AG04450 (cell line): ENCODE measurements at regions of chr15 and their contacts with region 1.

Region 1: DNA sequence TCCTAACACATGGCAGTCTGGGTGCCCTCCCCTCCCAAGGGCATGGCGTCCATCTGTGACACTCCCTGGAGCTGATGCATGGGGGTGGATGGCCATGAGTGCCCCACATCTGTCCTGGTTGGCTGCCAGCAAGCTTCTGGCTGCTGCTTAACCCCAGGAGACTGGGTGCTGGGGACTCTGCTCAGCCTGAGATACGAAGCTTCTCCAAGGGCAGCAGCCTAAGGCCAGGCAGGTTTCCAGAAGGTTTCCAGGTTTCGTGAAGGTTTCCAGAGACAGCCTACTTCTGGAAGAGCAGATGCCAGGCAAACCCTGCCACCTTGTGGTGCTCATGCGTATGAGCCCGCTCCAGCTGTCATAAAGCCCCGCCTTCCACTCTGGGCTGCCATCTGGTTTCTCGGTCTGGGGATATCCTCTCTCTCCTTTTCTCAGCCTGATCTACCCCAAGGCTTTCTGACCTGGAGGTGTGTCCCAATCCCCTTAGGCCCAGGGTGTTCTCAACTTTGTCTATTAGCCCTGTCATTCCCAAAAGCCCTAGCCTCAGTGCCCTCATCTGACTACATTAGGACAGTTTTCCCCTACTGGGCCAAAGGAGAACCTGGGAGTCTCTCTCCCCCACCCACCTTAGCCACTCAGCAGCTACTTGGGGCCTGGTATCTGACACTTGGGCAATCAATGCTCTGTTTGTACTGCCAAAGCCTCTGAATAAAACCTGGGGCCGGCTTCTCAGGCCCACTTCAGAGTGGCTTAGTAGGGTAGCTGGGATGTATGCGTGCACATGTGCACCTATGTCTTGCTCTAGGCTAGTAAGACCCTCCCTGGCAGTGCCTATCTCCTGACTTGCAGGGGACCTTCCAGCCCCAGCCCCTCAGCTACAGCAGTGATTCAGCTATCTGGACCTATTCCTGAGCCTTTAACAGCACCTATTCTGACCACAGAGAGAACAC is 12.0 kb downstream of the MRPL46 start:
- DNase-seq: peak; percentile 33
- H3K4me3 ChIP-seq: no peak overlapping the region
- H3K27ac ChIP-seq: no peak overlapping the region
- H3K27me3 ChIP-seq: peaks cover 5% of the 10 kb centered on the region
- CTCF ChIP-seq: peak; percentile 75

Region 2: DNA sequence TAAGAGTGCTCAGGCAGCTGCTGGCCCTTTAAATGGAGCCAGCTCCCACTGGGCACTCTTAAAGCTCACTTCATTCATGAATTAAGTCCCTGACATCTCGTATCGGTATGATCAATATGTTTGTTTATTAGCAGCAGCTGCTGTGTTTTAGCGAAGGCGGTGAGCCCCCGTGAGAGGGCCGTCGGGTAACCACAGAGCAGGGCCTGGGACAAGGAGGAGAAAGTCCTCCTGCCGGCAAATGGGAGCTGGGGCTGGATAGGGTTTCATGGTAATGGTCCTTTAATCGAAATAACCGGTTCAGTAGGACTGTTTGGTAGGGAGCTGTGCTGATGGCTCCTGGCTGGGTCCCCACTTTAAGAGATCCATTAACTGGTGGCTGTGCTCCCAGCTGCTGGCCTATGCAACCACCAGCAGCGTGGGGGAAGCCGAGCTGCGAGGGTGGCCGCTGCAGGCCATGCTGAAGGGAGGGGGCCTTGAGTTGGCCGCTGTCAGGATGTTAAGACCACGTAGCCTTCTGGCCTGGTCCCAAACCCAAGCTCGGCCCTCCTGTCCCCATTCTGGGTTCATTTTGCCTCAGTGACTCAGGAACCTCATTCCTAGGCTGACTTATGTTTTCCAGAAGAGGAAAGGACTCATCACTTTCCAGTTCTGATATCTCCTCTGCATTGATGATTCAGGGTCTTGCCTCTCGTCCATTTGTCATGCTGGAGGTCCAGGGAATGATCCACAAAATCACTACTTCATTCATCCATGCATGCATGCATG is 131.0 kb before region 1 on chr15:
- CTCF ChIA-PET with region 1: no interaction called
- POLR2A ChIA-PET with region 1: no interaction called
- DNase-seq: no peak
- H3K4me3 ChIP-seq: no peak overlapping the region
- H3K27ac ChIP-seq: no peak overlapping the region
- H3K27me3 ChIP-seq: no peaks in the 10 kb centered on the region
- CTCF ChIP-seq: no peak

Region 3: DNA sequence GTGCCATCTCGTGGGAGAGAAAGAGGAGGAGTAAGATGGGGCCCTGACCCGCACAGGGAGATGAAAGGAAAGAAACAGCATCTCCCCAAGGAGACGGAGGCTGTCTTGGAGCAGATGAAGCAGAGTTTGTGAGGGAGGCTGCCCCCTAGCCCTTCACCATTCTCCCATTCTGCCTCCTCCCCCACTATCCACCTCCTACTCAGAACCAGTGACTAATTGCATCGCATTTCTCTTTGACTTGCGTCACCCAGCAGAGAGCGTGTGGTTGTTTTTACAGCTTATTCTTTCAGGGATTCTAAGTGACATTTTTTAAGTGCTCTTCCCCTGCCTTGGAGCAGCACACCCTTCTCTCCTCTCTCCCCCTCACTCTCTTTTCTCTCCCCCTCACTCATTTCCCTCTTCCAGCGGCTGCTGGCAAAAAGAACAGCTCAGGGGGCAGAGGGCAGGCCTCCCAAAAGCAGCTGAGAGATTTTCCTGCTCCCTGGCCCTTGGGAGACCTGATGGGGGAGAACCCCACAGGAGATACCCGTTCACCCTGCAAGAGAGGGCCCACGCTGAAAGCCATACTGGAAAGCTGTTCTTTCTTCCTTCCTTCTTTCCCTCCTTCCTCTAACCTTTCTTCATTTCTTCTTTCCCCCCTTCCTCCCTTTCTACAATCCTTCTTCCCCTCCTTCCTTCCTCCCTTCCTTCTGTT is 79.8 kb before region 1 on chr15:
- CTCF ChIA-PET with region 1: no interaction called
- POLR2A ChIA-PET with region 1: no interaction called
- DNase-seq: peak; percentile 13
- H3K4me3 ChIP-seq: no peak overlapping the region
- H3K27ac ChIP-seq: peak overlapping the region; percentile 91
- H3K27me3 ChIP-seq: no peaks in the 10 kb centered on the region
- CTCF ChIP-seq: no peak

Region 4: DNA sequence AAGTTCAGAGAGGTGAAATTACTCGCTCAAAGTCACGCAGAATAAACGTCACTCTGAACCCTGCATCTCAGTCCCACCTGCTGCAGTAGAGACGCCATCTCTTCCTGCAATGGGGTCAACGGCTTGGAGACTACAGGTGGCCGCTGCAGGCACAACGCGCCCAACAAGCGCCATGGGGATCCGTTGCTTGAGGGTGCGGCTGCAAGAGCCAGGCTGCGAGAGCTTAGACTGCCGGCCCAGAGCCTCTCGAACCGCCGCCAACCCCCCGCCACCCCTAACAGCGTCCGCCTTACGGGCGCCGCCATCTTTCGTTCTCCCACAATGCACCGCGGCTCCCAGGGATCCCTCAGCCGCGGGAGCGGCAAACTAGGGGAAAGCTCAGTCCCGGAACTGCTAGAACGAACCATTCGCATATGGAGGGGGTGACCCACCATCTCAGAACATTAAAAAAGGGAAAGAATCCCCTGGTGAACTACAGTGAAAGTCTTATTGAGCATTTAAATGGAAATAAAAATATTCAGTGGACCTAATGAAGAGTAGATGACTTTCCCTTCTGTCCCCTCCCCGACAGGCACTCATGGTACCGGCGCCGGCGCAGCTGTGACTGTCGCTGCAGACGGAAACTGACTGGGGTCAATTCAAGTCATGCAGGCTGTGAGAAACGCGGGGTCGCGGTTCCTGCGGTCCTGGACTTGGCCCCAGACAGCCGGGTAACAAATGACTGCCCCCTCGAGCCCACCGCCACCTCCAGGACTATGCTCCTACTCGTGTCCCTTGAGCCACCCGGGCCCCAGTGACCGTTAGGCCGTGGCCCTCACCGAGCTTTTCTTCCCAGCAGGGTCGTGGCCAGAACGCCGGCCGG is 12.2 kb after region 1 on chr15 and contains the starts of genes MRPL46 and MRPS11:
- CTCF ChIA-PET with region 1: interaction called, 29 read pairs
- POLR2A ChIA-PET with region 1: interaction called, 5 read pairs
- DNase-seq: peak; percentile 50
- H3K4me3 ChIP-seq: peak within 1 kb of the TSS; percentile 97
- H3K27ac ChIP-seq: peak within 1 kb of the TSS; percentile 53
- H3K27me3 ChIP-seq: no peaks in the 10 kb centered on the region
- CTCF ChIP-seq: no peak
- polyA plus RNA-seq, gene MRPL46: 23.1 and 28.0 TPM in 2 replicates
- polyA plus RNA-seq, gene MRPS11: 55.6 and 65.0 TPM in 2 replicates